ENCODE measurements at regions of chr9 and their contacts with region 1.

Region 1: GRCh38 chr9:134698587-134699342 is 57.2 kb downstream of the COL5A1 start:
- DNase-seq: peak; percentile 50
- H3K4me3 ChIP-seq: no peak overlapping the region
- H3K27ac ChIP-seq: peak overlapping the region; percentile 25
- H3K4me1 ChIP-seq: no peaks in the 10 kb centered on the region
- H3K27me3 ChIP-seq: no peaks in the 10 kb centered on the region
- CTCF ChIP-seq: peak; percentile 91

Region 2: GRCh38 chr9:134738869-134739659 is 40.3 kb after region 1 on chr9:
- CTCF ChIA-PET with region 1: interaction called, 3 read pairs
- POLR2A ChIA-PET with region 1: no interaction called
- intact Hi-C with region 1: loop called (anchors 5 kb)
- DNase-seq: peak; percentile 74
- H3K4me3 ChIP-seq: no peak overlapping the region
- H3K27ac ChIP-seq: no peak overlapping the region
- H3K4me1 ChIP-seq: no peaks in the 10 kb centered on the region
- H3K27me3 ChIP-seq: no peaks in the 10 kb centered on the region
- CTCF ChIP-seq: peak; percentile 85